ENCODE measurements at regions of chr5 and their contacts with region 1.

Region 1: GRCh38 chr5:79535477-79536192 is 21.7 kb upstream of the HOMER1 start:
- DNase-seq: peak; percentile 87
- ATAC-seq: peak; percentile 94
- H3K4me3 ChIP-seq: no peak overlapping the region
- H3K27ac ChIP-seq: peak overlapping the region; percentile 48
- H3K4me1 ChIP-seq: peaks cover 57% of the 10 kb centered on the region
- H3K27me3 ChIP-seq: no peaks in the 10 kb centered on the region
- CTCF ChIP-seq: peak; percentile 21; the same call in 1 of the 2 replicates
- EP300 ChIP-seq: peak; percentile 49 to 89; a peak in 3 of 4 replicates
- POLR2A ChIP-seq: no peak
- RAD21 ChIP-seq: no peak

Region 2: GRCh38 chr5:78731884-78732283 is 803.8 kb before region 1 on chr5:
- CTCF ChIA-PET with region 1: no interaction called
- POLR2A ChIA-PET with region 1: no interaction called
- in situ Hi-C with region 1: no loop called
- intact Hi-C with region 1: no loop called
- DNase-seq: no peak
- ATAC-seq: no peak
- H3K4me3 ChIP-seq: no peak overlapping the region
- H3K27ac ChIP-seq: no peak overlapping the region
- H3K4me1 ChIP-seq: peaks cover 21% of the 10 kb centered on the region
- H3K27me3 ChIP-seq: no peaks in the 10 kb centered on the region
- CTCF ChIP-seq: no peak
- EP300 ChIP-seq: no peak
- POLR2A ChIP-seq: no peak
- RAD21 ChIP-seq: no peak

Region 3: DNA sequence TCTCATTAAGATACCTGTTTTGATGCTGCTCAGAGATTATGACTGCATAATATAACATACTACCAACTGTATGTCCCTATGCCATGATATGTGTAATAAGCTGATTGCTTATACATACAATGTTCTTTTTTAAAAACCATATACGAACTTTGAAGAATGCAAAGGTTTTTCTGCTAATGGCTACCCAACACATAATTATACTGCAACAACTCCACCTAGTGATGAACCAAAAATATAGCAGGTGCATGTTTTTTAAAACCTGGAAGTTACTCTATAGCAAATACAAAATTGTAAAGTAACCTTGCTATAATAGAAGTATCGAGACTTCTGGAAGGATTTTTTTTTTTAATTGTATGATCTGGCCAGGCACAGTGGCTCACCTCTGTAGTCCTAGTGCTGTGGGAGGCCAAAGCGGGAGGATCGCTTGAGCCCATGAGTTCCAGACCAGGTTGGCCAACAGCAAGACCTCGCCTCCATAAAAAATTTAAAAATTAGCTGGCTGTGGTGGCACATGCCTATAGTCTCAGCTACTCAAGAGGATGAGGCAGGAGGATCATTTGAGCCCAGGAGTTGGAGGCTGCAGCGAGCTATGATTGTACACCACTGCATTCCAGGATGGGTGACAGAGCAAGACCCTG is 70.8 kb before region 1 on chr5:
- CTCF ChIA-PET with region 1: no interaction called
- POLR2A ChIA-PET with region 1: no interaction called
- in situ Hi-C with region 1: no loop called
- intact Hi-C with region 1: no loop called
- DNase-seq: no peak
- ATAC-seq: no peak
- H3K4me3 ChIP-seq: no peak overlapping the region
- H3K27ac ChIP-seq: no peak overlapping the region
- H3K4me1 ChIP-seq: no peaks in the 10 kb centered on the region
- H3K27me3 ChIP-seq: no peaks in the 10 kb centered on the region
- CTCF ChIP-seq: peak; percentile 61
- EP300 ChIP-seq: no peak
- POLR2A ChIP-seq: no peak
- RAD21 ChIP-seq: no peak

Region 4: GRCh38 chr5:79546782-79547428 is 11.3 kb after region 1 on chr5:
- CTCF ChIA-PET with region 1: interaction called, 3 read pairs
- POLR2A ChIA-PET with region 1: interaction called, 15 read pairs
- in situ Hi-C with region 1: no loop called
- intact Hi-C with region 1: no loop called
- DNase-seq: peak; percentile 82
- ATAC-seq: peak; percentile 88
- H3K4me3 ChIP-seq: peak overlapping the region; percentile 46 to 63 (median 46)
- H3K27ac ChIP-seq: peak overlapping the region; percentile 70
- H3K4me1 ChIP-seq: peaks cover 60% of the 10 kb centered on the region
- H3K27me3 ChIP-seq: no peaks in the 10 kb centered on the region
- CTCF ChIP-seq: no peak
- EP300 ChIP-seq: peak in 1 of 2 experiments; percentile 80; a peak in 2 of 4 replicates
- POLR2A ChIP-seq: no peak
- RAD21 ChIP-seq: no peak